CD4-positive, alpha-beta T cell (primary cell): ENCODE measurements at regions of chr12 and their contacts with region 1.

Region 1: DNA sequence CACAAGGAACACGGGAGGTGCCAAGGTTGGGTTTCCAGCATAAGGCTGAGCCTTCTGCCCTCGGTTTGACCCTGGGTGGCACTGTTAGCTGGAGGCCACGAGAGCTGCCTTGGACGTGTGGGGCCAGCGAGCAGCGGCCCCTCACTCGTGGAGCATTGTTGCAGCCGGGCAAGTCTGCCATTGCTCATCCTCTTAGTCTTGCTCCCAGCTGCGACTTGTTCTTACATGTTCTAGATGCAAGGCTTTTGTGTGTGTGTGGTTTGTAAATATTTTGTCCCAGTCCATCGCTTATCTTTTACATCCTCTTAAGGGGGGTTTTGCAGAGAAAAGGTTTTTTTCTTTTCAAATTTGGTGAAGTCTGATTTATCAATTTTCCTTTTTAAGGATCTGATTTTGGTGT is 21.1 kb upstream of the C1S start:
- DNase-seq: no peak
- ATAC-seq: no peak
- H3K4me3 ChIP-seq: no peak overlapping the region
- H3K4me3 Mint-ChIP-seq: no peak overlapping the region
- H3K27ac ChIP-seq: no peak overlapping the region
- H3K27ac Mint-ChIP-seq: no peak overlapping the region
- H3K4me1 ChIP-seq: no peaks in the 10 kb centered on the region
- H3K4me1 Mint-ChIP-seq: no peaks in the 10 kb centered on the region
- H3K27me3 ChIP-seq: no peaks in the 10 kb centered on the region
- H3K27me3 Mint-ChIP-seq: no peaks in the 10 kb centered on the region
- CTCF ChIP-seq: no peak

Region 2: GRCh38 chr12:7079826-7080125 is 40.4 kb after region 1 on chr12:
- CTCF ChIA-PET with region 1: no interaction called
- POLR2A ChIA-PET with region 1: no interaction called
- intact Hi-C with region 1: loop called in 1 of 2 experiments (anchors 5 kb)
- DNase-seq: no peak
- ATAC-seq: no peak
- H3K4me3 ChIP-seq: no peak overlapping the region
- H3K4me3 Mint-ChIP-seq: no peak overlapping the region
- H3K27ac ChIP-seq: no peak overlapping the region
- H3K27ac Mint-ChIP-seq: no peak overlapping the region
- H3K4me1 ChIP-seq: no peaks in the 10 kb centered on the region
- H3K4me1 Mint-ChIP-seq: no peaks in the 10 kb centered on the region
- H3K27me3 ChIP-seq: no peaks in the 10 kb centered on the region
- H3K27me3 Mint-ChIP-seq: no peaks in the 10 kb centered on the region
- CTCF ChIP-seq: no peak

Region 3: DNA sequence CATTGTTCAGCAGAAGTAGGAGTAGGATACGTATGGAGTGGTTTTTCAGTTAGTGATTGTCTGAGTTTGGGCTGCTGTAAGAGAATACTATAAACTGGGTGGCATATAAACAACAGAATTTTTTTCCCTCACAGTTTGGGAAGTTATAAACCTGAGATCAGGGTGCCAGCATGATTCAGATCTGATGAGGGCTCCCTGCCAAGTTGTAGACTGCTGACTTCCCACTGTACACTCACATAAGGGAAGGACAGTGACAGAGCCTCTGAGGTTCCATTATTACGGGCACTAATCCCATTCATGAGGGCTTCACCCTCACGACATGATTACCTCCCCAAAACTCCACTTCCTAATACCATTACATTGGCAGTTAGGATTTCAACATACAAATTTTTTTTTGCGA is 315.1 kb after region 1 on chr12:
- CTCF ChIA-PET with region 1: no interaction called
- POLR2A ChIA-PET with region 1: no interaction called
- intact Hi-C with region 1: no loop called
- DNase-seq: no peak
- ATAC-seq: no peak
- H3K4me3 ChIP-seq: no peak overlapping the region
- H3K4me3 Mint-ChIP-seq: no peak overlapping the region
- H3K27ac ChIP-seq: no peak overlapping the region
- H3K27ac Mint-ChIP-seq: no peak overlapping the region
- H3K4me1 ChIP-seq: peaks cover 5% of the 10 kb centered on the region
- H3K4me1 Mint-ChIP-seq: peaks cover 10% of the 10 kb centered on the region
- H3K27me3 ChIP-seq: no peaks in the 10 kb centered on the region
- H3K27me3 Mint-ChIP-seq: no peaks in the 10 kb centered on the region
- CTCF ChIP-seq: no peak